GM13977 (cell line): ENCODE measurements at regions of chr9 and their contacts with region 1.

Region 1: GRCh38 chr9:15529566-15530324 is 19.0 kb upstream of the PSIP1 start:
- DNase-seq: peak; percentile 82
- CTCF ChIP-seq: no peak

Region 2: GRCh38 chr9:15592317-15592716 is 62.6 kb after region 1 on chr9:
- in situ Hi-C with region 1: loop called (anchors 10 kb)
- DNase-seq: no peak
- CTCF ChIP-seq: no peak